Panc1 (cell line): ENCODE measurements at regions of chr2 and their contacts with region 1.

Region 1: DNA sequence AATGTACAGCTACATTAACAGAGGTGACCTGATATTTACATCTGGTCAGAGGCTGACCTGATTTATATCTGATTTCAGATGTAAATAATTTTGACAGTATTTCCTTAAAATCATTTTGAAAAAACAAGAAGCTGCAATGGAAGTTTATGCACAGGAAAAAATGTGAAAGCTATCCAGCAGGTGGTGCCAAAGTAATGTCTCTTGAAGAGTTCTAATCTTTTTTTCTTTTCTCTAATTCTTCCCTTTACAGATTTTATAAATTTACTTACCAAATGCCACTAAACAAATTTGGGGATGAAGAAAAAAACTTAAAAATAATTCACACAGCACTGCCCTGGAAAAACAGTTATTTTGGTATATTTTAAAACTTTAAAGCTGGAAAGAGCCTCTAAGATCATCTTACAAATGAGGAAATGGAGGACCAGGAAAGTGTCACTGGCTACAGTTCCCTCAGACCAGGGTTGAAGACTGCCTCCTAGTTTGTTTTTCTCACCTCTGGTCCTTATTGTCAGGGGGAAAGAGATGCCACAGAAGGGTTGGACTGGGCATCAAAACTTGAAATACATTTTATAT is 16.4 kb upstream of the FBLN7 start:
- DNase-seq: no peak
- ATAC-seq: no peak
- H3K4me3 ChIP-seq: no peak overlapping the region
- H3K27ac ChIP-seq: no peak overlapping the region
- H3K4me1 ChIP-seq: no peaks in the 10 kb centered on the region
- H3K27me3 ChIP-seq: no peaks in the 10 kb centered on the region
- CTCF ChIP-seq: peak; percentile 72; the same call in 1 of the 2 replicates

Region 2: DNA sequence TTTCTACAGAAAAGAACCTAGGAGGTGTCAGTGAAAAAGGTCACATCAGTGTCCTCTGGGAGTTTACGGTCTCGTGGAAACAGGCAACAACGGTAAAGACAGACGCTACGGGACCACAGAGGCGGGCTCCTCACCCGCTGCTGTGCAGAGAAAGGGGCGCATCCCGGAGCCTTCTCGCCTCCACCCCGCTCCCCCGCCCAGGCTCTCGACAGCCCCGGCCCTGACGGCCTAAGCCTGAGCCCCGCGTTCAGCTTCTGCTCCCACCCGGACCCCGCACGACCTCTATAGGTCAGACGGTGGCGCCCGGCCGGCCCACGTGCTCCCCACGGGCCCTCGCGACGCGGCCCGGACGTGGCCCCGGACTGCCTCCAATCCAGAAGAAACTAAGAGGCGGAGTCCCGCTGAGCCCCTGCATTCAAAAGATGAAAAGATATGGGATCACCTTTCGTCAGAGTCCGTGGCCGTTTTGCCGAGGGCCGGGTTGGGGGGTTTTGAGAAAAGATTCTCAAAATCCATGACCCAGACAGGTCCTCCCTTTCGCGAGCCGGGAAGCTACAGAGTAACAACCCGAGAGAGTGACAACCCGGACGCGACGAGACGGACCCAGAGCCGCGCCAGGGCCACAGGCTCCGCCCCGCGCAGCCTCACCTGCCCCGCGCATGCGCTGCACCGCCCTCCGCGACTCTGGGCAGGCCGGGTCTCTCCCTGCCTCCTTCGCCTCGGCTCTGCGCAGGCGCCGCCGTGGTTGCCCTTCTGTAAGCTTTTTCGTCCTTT is 132.9 kb after region 1 on chr2 and contains the start of gene ZC3H8:
- CTCF ChIA-PET with region 1: interaction called, 4 read pairs
- POLR2A ChIA-PET with region 1: no interaction called
- in situ Hi-C with region 1: no loop called
- intact Hi-C with region 1: loop called (anchors 10 kb)
- DNase-seq: peak; percentile 64
- ATAC-seq: peak; percentile 99
- H3K4me3 ChIP-seq: peak within 1 kb of the TSS; percentile 76 to 80
- H3K27ac ChIP-seq: peak within 1 kb of the TSS; percentile 92
- H3K4me1 ChIP-seq: peaks cover 14% of the 10 kb centered on the region
- H3K27me3 ChIP-seq: no peaks in the 10 kb centered on the region
- CTCF ChIP-seq: no peak
- total RNA-seq, gene ZC3H8: 4.4 TPM

Region 3: DNA sequence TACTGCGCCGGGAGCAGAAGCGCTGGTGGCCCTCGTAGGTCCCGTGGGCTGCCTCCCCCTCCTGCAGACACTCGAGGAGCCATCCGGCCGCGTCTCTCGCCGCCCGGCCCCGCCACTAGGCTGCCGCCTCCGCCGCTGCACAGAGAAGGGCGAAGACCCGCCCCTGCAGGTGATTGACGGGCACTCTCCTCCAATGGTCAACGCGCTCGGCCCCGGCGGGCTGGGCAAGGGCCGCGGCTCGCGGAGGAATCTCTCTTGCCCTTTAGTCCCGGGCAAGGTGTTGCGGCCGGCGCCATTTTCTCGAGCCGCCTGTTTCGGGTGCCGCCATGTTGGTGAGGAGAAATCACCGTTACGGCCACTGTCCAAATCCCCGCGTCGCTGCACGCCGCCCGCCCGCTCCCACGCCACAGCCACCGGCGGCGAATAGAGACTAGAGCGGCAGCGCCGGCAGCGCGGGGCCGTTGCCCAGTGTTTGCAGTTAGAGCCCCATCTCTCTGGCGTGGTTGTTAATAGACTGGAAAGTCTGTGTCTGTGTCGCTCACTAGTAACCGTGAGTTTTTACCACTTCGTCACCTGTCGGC is 153.6 kb after region 1 on chr2 and contains the start of gene ZC3H6:
- CTCF ChIA-PET with region 1: no interaction called
- POLR2A ChIA-PET with region 1: interaction called, 11 read pairs
- in situ Hi-C with region 1: no loop called
- intact Hi-C with region 1: no loop called
- DNase-seq: peak; percentile 76
- ATAC-seq: peak; percentile 98
- H3K4me3 ChIP-seq: peak within 1 kb of the TSS; percentile 87 to 88
- H3K27ac ChIP-seq: peak within 1 kb of the TSS; percentile 96
- H3K4me1 ChIP-seq: peaks cover 6% of the 10 kb centered on the region; the same call in 1 of the 2 replicates
- H3K27me3 ChIP-seq: no peaks in the 10 kb centered on the region
- CTCF ChIP-seq: no peak
- total RNA-seq, gene ZC3H6: 5.3 TPM

Region 4: GRCh38 chr2:112529757-112530156 is 408.0 kb after region 1 on chr2:
- CTCF ChIA-PET with region 1: no interaction called
- POLR2A ChIA-PET with region 1: no interaction called
- in situ Hi-C with region 1: no loop called
- intact Hi-C with region 1: no loop called
- DNase-seq: no peak
- ATAC-seq: no peak
- H3K4me3 ChIP-seq: no peak overlapping the region
- H3K27ac ChIP-seq: no peak overlapping the region
- H3K4me1 ChIP-seq: no peaks in the 10 kb centered on the region
- H3K27me3 ChIP-seq: no peaks in the 10 kb centered on the region
- CTCF ChIP-seq: no peak